Ascending aorta (tissue), 2 donors: ENCODE measurements at regions of chr5 and their contacts with region 1.

Region 1: GRCh38 chr5:38467353-38468040 is 88.9 kb downstream of the LIFR start:
- DNase-seq: peak in 1 of 2 donors; percentile 91
- H3K4me3 ChIP-seq: peak overlapping the region in 1 of 2 donors; percentile 41
- H3K27ac ChIP-seq: peak overlapping the region; percentile 91 to 95
- H3K4me1 ChIP-seq: peaks cover 32 to 66% of the 10 kb centered on the region in 2 donors
- H3K27me3 ChIP-seq: no peaks in the 10 kb centered on the region
- CTCF ChIP-seq: no peak

Region 2: DNA sequence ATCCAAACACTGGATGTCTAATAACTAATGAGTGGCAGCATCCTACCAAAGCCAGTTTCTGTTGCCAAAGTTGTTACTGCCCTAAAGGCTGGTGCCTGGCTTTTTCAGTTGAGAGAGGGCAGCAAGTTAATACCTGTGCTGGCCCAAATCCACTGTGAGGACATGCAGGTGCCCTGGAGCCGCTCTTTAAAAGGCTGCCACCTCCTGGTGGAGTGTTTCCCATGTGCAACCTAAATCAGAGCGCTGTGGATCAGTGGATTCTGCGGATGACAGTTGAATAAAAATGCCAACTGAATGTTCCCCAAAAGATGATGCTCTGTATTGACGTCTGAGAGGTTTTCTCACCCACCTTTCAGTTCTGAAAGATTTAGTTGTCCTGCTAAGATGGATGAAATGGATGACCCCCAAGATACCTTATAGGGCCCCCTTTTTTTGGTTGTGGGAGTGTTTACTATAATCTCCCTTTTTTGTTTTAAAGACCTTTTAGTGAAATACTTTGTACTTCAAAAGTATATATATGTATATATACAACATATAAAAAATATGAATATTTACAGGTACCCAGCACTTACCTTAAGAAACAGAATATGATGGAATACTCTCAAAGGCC is 62.7 kb before region 1 on chr5:
- intact Hi-C with region 1: no loop called
- DNase-seq: no peak
- H3K4me3 ChIP-seq: no peak overlapping the region
- H3K27ac ChIP-seq: no peak overlapping the region
- H3K4me1 ChIP-seq: no peaks in the 10 kb centered on the region
- H3K27me3 ChIP-seq: no peaks in the 10 kb centered on the region
- CTCF ChIP-seq: no peak

Region 3: GRCh38 chr5:38420691-38421390 is 46.7 kb before region 1 on chr5:
- intact Hi-C with region 1: loop called (anchors 2 kb)
- DNase-seq: peak in 1 of 2 donors; percentile 80
- H3K4me3 ChIP-seq: no peak overlapping the region
- H3K27ac ChIP-seq: peak overlapping the region; percentile 45 to 63
- H3K4me1 ChIP-seq: peaks cover 5 to 7% of the 10 kb centered on the region in 2 donors
- H3K27me3 ChIP-seq: no peaks in the 10 kb centered on the region
- CTCF ChIP-seq: peak; percentile 44 to 72 (median 62)

Region 4: DNA sequence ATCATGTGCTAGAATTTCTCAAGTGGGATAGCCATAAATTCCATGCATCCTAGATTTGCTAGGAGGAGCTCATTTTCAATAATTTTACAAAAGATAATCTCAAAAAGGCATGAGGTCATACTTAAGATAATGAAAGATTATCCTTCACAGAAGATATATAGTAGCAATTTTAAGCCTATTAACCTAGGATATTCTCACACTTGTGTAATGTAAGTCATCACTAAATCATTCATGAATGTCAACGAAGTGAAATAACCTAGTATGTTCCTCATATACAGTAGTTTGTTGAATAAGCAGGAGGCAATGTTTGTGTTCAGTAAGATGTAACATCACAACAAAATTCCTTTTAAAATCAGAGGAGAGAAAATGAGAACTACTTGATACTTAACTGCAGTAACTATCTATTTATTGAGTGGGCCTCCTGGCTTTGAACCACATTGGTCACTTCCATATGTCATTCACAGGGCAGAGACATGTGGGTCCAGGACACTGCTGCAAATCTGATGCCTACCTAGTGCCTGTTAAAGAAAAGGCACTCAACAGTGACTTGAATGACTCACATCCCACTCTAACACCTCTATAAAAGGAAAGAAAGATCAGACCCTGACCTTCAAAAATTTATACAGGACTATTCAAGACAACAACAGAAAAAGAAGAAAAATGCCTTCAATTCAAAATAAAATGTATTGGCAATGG is 80.7 kb after region 1 on chr5:
- intact Hi-C with region 1: loop called (anchors 2 kb)
- DNase-seq: no peak
- H3K4me3 ChIP-seq: peak overlapping the region in 1 of 2 donors; percentile 26
- H3K27ac ChIP-seq: peak overlapping the region; percentile 39 to 72
- H3K4me1 ChIP-seq: peaks cover 5 to 32% of the 10 kb centered on the region in 2 donors
- H3K27me3 ChIP-seq: no peaks in the 10 kb centered on the region
- CTCF ChIP-seq: no peak